A673 (cell line): ENCODE measurements at regions of chr17 and their contacts with region 1.

Region 1: DNA sequence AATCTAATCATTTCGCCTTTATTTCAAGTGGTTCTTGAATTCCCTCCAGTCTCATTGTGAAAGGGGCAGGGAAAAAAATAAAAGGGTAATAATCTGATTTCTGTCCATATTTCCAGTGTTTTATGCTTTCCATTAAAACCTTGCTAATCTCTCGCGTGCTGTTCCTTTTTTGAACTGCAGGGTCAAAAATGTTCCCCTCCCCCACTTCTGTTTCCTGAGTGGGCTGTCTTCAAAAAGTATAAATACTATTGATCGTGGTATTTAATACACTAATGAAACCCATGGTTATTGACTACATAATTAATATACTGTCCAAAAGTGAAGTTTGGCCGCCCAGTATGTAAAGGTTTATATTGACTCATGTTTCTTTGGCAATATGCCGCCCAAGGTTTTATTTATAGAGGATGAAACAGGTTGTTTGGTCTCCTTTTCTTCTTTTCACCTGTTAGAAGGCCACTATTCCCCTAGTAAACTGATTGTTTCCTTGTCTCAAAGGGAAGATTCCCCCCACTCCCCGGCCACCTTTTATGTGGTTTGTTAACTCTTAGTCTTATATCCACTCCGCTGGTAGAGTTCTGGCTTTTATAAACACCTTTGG is 69.7 kb downstream of the RPA1 start:
- DNase-seq: no peak
- H3K4me3 ChIP-seq: no peak overlapping the region
- H3K27ac ChIP-seq: no peak overlapping the region
- H3K4me1 ChIP-seq: no peaks in the 10 kb centered on the region
- H3K27me3 ChIP-seq: no peaks in the 10 kb centered on the region
- CTCF ChIP-seq: peak; percentile 34

Region 2: DNA sequence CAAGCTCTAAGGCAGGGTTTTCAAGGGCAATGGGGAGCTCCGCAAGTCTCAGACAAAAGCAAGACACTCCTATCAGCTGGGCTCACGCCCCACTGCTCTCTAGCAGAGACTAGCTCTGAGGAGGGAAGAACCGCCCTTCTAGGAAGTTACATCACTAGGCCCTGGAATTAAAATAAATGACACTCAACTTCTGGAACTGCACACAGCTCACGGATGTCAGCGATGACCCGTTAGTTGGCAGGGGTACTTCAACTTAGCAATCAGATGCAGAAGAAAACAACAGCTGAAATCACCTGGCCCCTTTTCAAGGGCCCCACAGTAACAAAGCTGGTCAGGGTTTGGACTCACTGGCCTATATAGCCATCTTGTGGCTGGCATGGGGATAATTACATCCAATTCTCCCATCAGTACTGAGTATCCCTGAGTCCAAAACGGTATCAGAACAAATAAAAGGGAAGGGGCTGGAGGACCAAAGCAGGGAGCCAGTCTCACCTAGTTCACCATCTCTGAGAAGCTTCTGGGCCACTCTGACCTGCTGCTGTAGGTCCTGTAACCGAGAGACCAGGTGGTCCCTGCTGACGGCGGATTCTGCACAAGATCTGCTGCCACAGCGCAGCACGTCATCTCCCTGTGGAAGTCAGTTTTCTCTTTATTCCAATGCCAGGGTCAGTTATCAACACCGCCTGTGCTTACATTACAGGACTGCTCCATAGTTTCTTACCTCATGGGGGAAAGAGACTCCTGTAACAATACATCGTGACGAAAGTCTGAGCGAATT is 115.5 kb before region 1 on chr17:
- CTCF ChIA-PET with region 1: no interaction called
- POLR2A ChIA-PET with region 1: no interaction called
- intact Hi-C with region 1: no loop called
- DNase-seq: peak; percentile 57
- H3K4me3 ChIP-seq: no peak overlapping the region
- H3K27ac ChIP-seq: peak overlapping the region; percentile 46
- H3K4me1 ChIP-seq: peaks cover 26% of the 10 kb centered on the region
- H3K27me3 ChIP-seq: no peaks in the 10 kb centered on the region
- CTCF ChIP-seq: peak; percentile 67

Region 3: GRCh38 chr17:2253768-2254406 is 354.4 kb after region 1 on chr17:
- CTCF ChIA-PET with region 1: interaction called, 11 read pairs
- POLR2A ChIA-PET with region 1: no interaction called
- intact Hi-C with region 1: no loop called
- DNase-seq: no peak
- H3K4me3 ChIP-seq: no peak overlapping the region
- H3K27ac ChIP-seq: no peak overlapping the region
- H3K4me1 ChIP-seq: no peaks in the 10 kb centered on the region
- H3K27me3 ChIP-seq: no peaks in the 10 kb centered on the region
- CTCF ChIP-seq: no peak